CD14-positive monocyte (primary cell): ENCODE measurements at regions of chr17 and their contacts with region 1.

Region 1: GRCh38 chr17:59372138-59372857 is 40.8 kb downstream of the YPEL2 start:
- DNase-seq: peak; percentile 55 to 70 (median 67)
- H3K4me3 ChIP-seq: peak overlapping the region in 2 of 3 experiments; percentile 39 to 45
- H3K4me3 Mint-ChIP-seq: peak overlapping the region; percentile 55 to 76
- H3K27ac ChIP-seq: peak overlapping the region; percentile 85 to 95
- H3K27ac Mint-ChIP-seq: peak overlapping the region; percentile 94 to 99 (median 97)
- H3K4me1 ChIP-seq: peaks cover 63 to 79% of the 10 kb centered on the region in 2 donors
- H3K4me1 Mint-ChIP-seq: peaks cover 84% of the 10 kb centered on the region
- H3K27me3 ChIP-seq: no peaks in the 10 kb centered on the region
- H3K27me3 Mint-ChIP-seq: peaks cover 0 to 4% (median 0%) of the 10 kb centered on the region in 3 donors
- CTCF ChIP-seq: no peak

Region 2: DNA sequence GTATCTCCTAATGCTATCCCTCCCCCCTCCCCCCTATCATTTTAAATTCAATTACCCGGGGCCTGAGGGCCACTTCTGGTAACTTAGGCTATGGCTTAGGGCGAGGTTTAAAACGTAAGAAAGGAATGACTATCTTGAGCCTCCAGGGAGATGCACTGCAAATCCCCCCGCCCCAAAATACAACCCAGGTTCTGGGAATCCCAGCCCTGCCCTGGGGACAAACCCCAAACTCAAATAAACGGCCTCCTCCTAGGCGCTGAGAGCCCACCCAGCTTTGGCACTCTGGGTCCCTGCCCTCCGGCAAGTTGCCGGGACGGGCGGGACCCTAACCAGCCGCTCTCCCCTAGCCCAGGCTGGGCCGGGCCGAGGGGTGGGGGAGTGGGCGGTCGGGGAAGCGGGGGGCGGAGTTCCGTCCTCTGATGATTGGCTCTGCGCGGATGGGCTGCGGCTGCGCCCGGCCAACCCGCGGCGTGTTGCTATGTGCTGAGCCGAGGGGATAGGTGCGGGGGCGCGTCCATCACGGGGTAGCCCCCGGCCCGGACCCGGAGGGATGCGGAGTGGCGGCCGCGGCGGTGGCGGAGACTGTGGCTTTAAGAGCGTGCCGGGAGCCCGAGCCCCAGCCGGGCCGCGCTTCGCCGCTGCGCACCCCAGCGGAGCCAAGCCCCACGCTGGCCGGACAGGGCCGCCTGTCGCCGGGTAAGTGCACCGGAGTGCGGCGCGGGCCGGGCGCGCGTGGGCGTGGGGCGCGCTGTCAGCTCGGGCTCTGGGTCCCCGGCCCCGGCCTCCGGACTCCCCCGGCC is 41.0 kb before region 1 on chr17 and contains the start of gene YPEL2:
- intact Hi-C with region 1: loop called (anchors 2 to 5 kb)
- DNase-seq: peak; percentile 85 to 91 (median 88)
- H3K4me3 ChIP-seq: peak within 1 kb of the TSS; percentile 71 to 92 (median 91)
- H3K4me3 Mint-ChIP-seq: peak within 1 kb of the TSS; percentile 97 to 100
- H3K27ac ChIP-seq: peak within 1 kb of the TSS; percentile 71 to 90
- H3K27ac Mint-ChIP-seq: peak within 1 kb of the TSS; percentile 92 to 98 (median 96)
- H3K4me1 ChIP-seq: peaks cover 49 to 60% of the 10 kb centered on the region in 2 donors
- H3K4me1 Mint-ChIP-seq: peaks cover 68% of the 10 kb centered on the region
- H3K27me3 ChIP-seq: no peaks in the 10 kb centered on the region
- H3K27me3 Mint-ChIP-seq: no peaks in the 10 kb centered on the region
- CTCF ChIP-seq: no peak
- polyA plus RNA-seq, gene YPEL2: 21.5 to 63.1 (median 25.1) TPM

Region 3: DNA sequence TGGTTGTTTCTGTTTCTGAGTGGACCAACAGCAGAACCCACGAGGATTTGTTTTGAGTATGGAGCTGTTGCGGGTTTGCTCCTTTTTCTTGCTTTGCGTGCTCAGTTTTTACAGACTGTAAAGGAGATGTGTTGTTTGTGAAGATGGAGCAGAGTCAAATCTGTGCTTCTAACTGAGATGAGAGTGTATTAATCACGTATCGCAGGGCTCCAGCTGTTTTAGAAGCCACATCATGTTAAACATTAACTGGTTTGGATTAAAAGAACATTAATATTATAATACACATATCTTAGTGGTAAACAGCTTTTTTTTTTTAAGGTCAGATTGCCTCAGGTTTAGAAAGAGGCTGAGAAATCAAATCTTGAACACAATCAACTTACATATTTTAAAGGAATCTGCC is 28.6 kb after region 1 on chr17:
- intact Hi-C with region 1: no loop called
- DNase-seq: no peak
- H3K4me3 ChIP-seq: no peak overlapping the region
- H3K4me3 Mint-ChIP-seq: no peak overlapping the region
- H3K27ac ChIP-seq: no peak overlapping the region
- H3K27ac Mint-ChIP-seq: no peak overlapping the region
- H3K4me1 ChIP-seq: no peaks in the 10 kb centered on the region
- H3K4me1 Mint-ChIP-seq: peaks cover 13% of the 10 kb centered on the region
- H3K27me3 ChIP-seq: no peaks in the 10 kb centered on the region
- H3K27me3 Mint-ChIP-seq: peaks cover 0 to 1% (median 0%) of the 10 kb centered on the region in 3 donors
- CTCF ChIP-seq: no peak